Esophagus muscularis mucosa (tissue), 4 donors: ENCODE measurements at regions of chr12 and their contacts with region 1.

Region 1: GRCh38 chr12:124680863-124681778 is 113.7 kb upstream of the NCOR2 start:
- DNase-seq: peak; percentile 95
- H3K4me3 ChIP-seq: no peak overlapping the region
- H3K27ac ChIP-seq: peak overlapping the region; percentile 87 to 92 (median 90)
- H3K4me1 ChIP-seq: peaks cover 50 to 98% (median 95%) of the 10 kb centered on the region in 4 donors
- H3K27me3 ChIP-seq: no peaks in the 10 kb centered on the region
- CTCF ChIP-seq: peak; percentile 21 to 31 (median 28)
- EP300 ChIP-seq: no peak
- POLR2A ChIP-seq: no peak

Region 2: DNA sequence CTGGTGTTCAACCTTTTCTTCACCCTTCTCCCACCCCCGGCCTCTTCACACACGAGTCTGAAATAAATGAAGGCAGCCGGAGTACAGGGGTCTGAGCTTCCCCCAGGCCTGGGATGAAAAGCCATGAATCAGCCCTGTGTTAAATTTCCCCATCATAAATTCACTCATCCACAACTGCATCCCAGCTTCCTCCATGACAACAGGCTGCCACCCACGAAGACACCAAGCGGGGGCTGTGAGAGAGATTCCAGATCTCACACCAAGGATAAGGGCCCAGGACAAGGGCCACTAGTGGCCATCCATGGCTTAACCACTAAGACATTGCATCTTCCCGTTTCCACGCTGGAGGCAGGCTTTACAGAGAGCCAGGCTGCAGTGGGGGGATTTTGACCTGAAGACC is 19.8 kb before region 1 on chr12:
- intact Hi-C with region 1: no loop called
- DNase-seq: no peak
- H3K4me3 ChIP-seq: no peak overlapping the region
- H3K27ac ChIP-seq: no peak overlapping the region
- H3K4me1 ChIP-seq: peaks cover 4 to 17% (median 14%) of the 10 kb centered on the region in 4 donors
- H3K27me3 ChIP-seq: no peaks in the 10 kb centered on the region
- CTCF ChIP-seq: no peak
- EP300 ChIP-seq: no peak
- POLR2A ChIP-seq: no peak

Region 3: DNA sequence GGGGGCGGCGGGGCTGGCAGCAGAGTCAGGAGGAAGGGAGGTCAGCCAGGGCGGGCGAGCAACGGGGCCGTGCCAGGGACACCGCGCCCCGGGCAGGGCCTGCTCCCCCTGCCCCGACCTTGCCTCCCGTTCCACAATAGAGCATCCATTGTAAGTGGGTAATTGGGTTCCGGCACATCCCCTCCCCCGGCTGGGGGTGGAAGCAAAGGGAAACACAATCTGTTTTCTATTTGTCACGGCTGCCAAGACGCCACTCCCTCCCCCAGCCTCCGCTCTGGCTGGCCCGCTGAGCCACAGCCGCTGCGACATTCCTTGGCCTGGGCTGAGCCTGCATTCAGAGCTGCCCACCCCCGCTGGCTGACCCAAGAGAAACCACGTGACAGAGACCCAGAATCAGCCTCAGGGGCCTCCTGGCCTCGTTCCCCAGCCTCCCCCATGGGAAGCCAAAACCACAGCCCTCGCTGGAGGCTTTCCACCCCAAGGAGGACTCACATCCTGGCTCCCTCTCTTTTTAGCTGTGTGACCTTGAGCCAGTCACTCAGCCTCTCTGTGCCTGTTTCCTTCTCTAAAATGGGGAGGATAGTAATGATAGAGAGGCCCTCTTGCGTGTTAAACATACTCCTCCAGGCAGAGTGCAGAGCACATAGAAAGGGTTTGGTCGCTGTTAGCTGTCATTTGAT is 64.9 kb after region 1 on chr12:
- intact Hi-C with region 1: loop called (anchors 10 kb)
- DNase-seq: peak; percentile 97
- H3K4me3 ChIP-seq: peak overlapping the region; percentile 16 to 30 (median 26)
- H3K27ac ChIP-seq: peak overlapping the region; percentile 89 to 96 (median 95)
- H3K4me1 ChIP-seq: peaks cover 23 to 87% (median 80%) of the 10 kb centered on the region in 4 donors
- H3K27me3 ChIP-seq: no peaks in the 10 kb centered on the region
- CTCF ChIP-seq: no peak
- EP300 ChIP-seq: peak; percentile 63
- POLR2A ChIP-seq: no peak

Region 4: GRCh38 chr12:124767066-124767821 is 86.1 kb after region 1 on chr12:
- intact Hi-C with region 1: no loop called
- DNase-seq: peak; percentile 95
- H3K4me3 ChIP-seq: no peak overlapping the region
- H3K27ac ChIP-seq: peak overlapping the region; percentile 80 to 89 (median 88)
- H3K4me1 ChIP-seq: peaks cover 41 to 54% (median 51%) of the 10 kb centered on the region in 4 donors
- H3K27me3 ChIP-seq: peaks cover 0 to under 1% (median 0%) of the 10 kb centered on the region in 4 donors
- CTCF ChIP-seq: peak in 2 of 3 experiments; percentile 99 to 100
- EP300 ChIP-seq: no peak
- POLR2A ChIP-seq: no peak